ENCODE measurements at regions of chrX and their contacts with region 1.

Region 1: DNA sequence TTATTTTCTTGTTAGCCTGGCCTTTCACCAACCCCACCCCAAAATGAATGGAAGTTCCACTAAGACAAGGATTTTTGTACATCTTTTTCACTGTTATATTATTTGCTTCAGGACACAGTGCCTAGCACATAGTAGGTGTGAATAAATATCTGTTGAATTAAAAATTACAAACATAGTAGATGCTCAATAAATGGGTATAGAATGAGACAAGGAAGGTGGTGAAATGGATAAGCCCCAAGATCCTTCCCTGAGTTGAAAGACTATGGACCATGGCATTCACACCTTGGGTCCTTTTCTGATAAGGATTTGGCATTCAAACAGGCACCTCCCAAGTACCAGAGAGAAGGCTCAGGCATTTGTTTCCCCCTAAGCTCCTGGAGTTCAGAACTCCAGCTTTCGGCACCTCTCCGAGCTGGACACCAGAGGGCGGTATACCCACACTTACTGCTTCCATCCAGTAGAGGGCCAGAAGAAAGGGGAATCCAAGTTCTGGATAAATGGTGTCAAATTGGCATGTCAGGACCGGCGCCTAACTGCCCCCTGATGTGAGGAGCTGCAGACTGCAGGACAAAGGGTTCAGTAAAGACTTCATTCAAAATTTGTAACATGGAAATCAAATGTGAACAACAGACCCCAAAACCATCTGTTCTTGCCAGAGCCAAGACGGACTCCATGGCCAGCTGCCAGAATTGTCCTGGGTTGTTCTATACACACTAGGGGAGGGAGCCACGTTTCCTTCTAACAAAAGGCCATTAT is 193.0 kb downstream of the GPC3 start:
- DNase-seq: peak; percentile 23 to 76 (median 41)
- ATAC-seq: peak; percentile 68
- H3K4me3 ChIP-seq: no peak overlapping the region
- H3K4me3 Mint-ChIP-seq: no peak overlapping the region
- H3K27ac ChIP-seq: no peak overlapping the region
- H3K27ac Mint-ChIP-seq: no peak overlapping the region
- H3K4me1 ChIP-seq: no peaks in the 10 kb centered on the region
- H3K4me1 Mint-ChIP-seq: no peaks in the 10 kb centered on the region
- H3K27me3 ChIP-seq: no peaks in the 10 kb centered on the region
- H3K27me3 Mint-ChIP-seq: no peaks in the 10 kb centered on the region
- CTCF ChIP-seq: peak; percentile 91

Region 2: GRCh38 chrX:133415276-133416105 is 376.9 kb before region 1 on chrX and contains the start of gene GPC4:
- CTCF ChIA-PET with region 1: no interaction called
- POLR2A ChIA-PET with region 1: no interaction called
- intact Hi-C with region 1: no loop called
- DNase-seq: peak in 1 of 14 experiments; percentile 2
- ATAC-seq: no peak
- H3K4me3 ChIP-seq: no peak within 1 kb of the TSS
- H3K4me3 Mint-ChIP-seq: no peak within 1 kb of the TSS
- H3K27ac ChIP-seq: no peak within 1 kb of the TSS
- H3K27ac Mint-ChIP-seq: no peak within 1 kb of the TSS
- H3K4me1 ChIP-seq: no peaks in the 10 kb centered on the region
- H3K4me1 Mint-ChIP-seq: no peaks in the 10 kb centered on the region
- H3K27me3 ChIP-seq: peaks cover 0 to 60% of the 10 kb centered on the region in 2 experiments
- H3K27me3 Mint-ChIP-seq: peaks cover 54% of the 10 kb centered on the region
- CTCF ChIP-seq: no peak
- total RNA-seq, gene GPC4: not detected

Region 3: DNA sequence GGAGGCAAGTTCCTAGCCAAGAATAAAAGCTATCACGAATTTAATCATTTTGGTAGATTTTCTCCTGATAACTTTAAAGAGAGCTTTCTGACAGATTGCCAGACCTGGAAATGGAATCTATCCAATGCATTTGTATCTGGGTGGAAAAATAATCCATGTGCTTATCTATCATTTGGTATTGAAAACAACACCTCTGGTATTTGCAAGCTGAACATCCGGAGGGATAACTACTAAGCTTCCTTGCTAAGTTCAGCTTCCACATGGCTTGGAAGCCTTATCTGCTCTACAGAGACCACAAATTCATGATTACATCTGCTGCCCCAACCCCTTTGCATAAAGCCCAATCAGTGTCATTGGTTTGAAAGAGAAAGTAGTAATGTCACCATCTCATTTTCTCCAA is 37.7 kb before region 1 on chrX:
- CTCF ChIA-PET with region 1: no interaction called
- POLR2A ChIA-PET with region 1: no interaction called
- intact Hi-C with region 1: no loop called
- DNase-seq: no peak
- ATAC-seq: no peak
- H3K4me3 ChIP-seq: no peak overlapping the region
- H3K4me3 Mint-ChIP-seq: no peak overlapping the region
- H3K27ac ChIP-seq: no peak overlapping the region
- H3K27ac Mint-ChIP-seq: no peak overlapping the region
- H3K4me1 ChIP-seq: peaks cover 4% of the 10 kb centered on the region
- H3K4me1 Mint-ChIP-seq: peaks cover 13% of the 10 kb centered on the region
- H3K27me3 ChIP-seq: no peaks in the 10 kb centered on the region
- H3K27me3 Mint-ChIP-seq: no peaks in the 10 kb centered on the region
- CTCF ChIP-seq: no peak

Region 4: DNA sequence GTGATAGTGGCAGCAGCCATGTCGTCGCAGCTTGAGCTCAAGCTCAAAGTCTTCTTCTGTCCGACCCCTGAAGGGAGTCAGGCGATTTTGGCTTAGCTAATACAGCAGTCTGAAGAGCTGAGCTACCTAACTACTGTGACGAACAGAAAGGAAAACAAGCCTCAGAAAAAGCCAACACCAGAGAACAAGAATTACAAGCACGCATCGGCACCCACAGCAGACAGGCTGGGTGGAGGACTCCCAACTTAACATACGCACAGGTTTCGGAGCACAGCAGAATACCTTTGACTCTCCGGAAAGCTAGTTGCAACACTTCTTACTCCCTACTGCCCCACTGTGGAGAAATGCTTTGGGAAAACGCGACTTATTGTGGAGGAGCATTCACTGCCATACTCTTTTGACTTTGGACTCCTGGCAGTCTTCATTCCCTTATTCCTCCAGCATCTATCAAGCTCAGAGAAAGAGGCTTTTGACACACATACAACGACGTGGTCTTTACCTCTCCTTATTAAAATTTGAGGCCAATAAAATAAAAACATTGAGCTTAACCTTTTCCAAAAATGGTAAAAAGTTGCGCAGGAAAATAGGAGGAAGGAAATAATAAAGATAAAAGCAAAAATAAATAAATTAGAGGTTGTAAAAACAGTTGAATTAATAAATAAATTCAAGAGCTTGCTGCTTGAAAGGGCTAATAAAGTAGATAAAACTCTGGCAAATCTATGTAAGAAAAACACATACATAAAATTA is 234.4 kb after region 1 on chrX:
- CTCF ChIA-PET with region 1: interaction called, 3 read pairs
- POLR2A ChIA-PET with region 1: interaction called, 4 read pairs
- intact Hi-C with region 1: loop called (anchors 2 to 5 kb)
- DNase-seq: peak in 8 of 14 experiments; percentile 0 to 43 (median 18)
- ATAC-seq: peak; percentile 49
- H3K4me3 ChIP-seq: peak overlapping the region; percentile 3
- H3K4me3 Mint-ChIP-seq: peak overlapping the region; percentile 58
- H3K27ac ChIP-seq: no peak overlapping the region
- H3K27ac Mint-ChIP-seq: no peak overlapping the region
- H3K4me1 ChIP-seq: peaks cover 4% of the 10 kb centered on the region
- H3K4me1 Mint-ChIP-seq: peaks cover 9% of the 10 kb centered on the region
- H3K27me3 ChIP-seq: no peaks in the 10 kb centered on the region
- H3K27me3 Mint-ChIP-seq: no peaks in the 10 kb centered on the region
- CTCF ChIP-seq: peak; percentile 11

Region 5: DNA sequence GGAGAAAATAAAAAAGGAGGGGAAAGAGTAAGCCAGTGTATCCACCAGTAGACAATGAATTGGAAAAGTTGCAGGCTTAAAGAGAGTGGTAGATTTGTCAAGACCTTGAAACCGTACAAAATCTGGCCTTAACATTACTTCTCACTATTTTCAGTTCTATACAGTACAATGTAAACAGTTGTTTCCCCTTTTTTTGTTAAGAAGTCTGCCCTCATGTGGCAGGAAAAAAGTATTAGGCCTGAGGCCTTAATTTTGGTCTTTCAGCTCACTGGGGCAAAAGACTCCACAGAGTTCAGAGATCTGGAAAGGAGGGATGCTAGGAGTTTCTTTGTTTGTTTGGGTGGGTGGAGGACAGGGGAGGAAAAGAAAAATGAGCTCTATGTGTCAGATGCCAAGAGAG is 351.9 kb after region 1 on chrX:
- CTCF ChIA-PET with region 1: no interaction called
- POLR2A ChIA-PET with region 1: no interaction called
- intact Hi-C with region 1: loop called in 1 of 2 experiments (anchors 10 kb)
- DNase-seq: peak in 3 of 14 experiments; percentile 1 to 8 (median 4)
- ATAC-seq: no peak
- H3K4me3 ChIP-seq: no peak overlapping the region
- H3K4me3 Mint-ChIP-seq: no peak overlapping the region
- H3K27ac ChIP-seq: no peak overlapping the region
- H3K27ac Mint-ChIP-seq: no peak overlapping the region
- H3K4me1 ChIP-seq: no peaks in the 10 kb centered on the region
- H3K4me1 Mint-ChIP-seq: no peaks in the 10 kb centered on the region
- H3K27me3 ChIP-seq: no peaks in the 10 kb centered on the region
- H3K27me3 Mint-ChIP-seq: no peaks in the 10 kb centered on the region
- CTCF ChIP-seq: peak; percentile 26

Region 6: DNA sequence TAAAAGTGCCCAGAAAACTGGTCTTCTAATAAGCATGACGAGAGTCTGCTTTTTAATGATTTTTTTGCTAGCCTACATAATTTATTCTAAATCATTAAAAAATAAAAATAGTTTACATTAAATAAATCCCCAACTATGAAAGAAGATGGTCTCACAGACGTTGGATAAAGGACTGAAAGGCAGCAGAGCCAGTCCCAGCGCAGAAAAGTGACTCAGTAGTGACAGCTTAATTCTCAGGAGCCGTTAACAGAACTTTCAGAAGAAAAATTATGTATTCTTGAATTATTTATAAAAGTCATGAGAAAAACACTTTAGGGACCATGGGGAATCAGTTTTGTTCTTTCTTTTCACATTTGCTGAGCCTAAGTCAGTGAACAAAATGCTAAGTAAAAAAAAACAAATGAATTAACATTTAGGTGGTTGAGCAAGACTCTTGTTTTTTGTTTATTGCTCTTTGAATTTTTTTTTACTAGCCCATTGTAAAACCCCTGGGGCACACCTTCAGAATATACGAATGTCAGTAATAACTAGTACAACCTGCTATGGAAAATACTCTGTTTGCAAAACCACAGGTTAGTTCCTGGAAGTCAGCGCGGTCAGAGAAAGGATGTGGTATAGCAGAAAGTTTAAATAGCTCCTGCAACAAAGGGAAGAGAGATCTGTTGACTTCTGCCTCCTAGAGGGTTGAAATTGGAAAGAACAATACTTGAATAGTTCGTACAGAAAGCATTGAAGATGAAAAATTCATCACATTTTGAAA is 394.2 kb after region 1 on chrX:
- CTCF ChIA-PET with region 1: no interaction called
- POLR2A ChIA-PET with region 1: no interaction called
- intact Hi-C with region 1: loop called (anchors 2 to 5 kb)
- DNase-seq: peak in 12 of 14 experiments; percentile 8 to 86 (median 42)
- ATAC-seq: peak; percentile 92
- H3K4me3 ChIP-seq: no peak overlapping the region
- H3K4me3 Mint-ChIP-seq: peak overlapping the region; percentile 72
- H3K27ac ChIP-seq: no peak overlapping the region
- H3K27ac Mint-ChIP-seq: peak overlapping the region; percentile 22
- H3K4me1 ChIP-seq: peaks cover 19% of the 10 kb centered on the region
- H3K4me1 Mint-ChIP-seq: peaks cover 37% of the 10 kb centered on the region
- H3K27me3 ChIP-seq: no peaks in the 10 kb centered on the region
- H3K27me3 Mint-ChIP-seq: peaks cover 14% of the 10 kb centered on the region
- CTCF ChIP-seq: peak; percentile 25

Region 7: DNA sequence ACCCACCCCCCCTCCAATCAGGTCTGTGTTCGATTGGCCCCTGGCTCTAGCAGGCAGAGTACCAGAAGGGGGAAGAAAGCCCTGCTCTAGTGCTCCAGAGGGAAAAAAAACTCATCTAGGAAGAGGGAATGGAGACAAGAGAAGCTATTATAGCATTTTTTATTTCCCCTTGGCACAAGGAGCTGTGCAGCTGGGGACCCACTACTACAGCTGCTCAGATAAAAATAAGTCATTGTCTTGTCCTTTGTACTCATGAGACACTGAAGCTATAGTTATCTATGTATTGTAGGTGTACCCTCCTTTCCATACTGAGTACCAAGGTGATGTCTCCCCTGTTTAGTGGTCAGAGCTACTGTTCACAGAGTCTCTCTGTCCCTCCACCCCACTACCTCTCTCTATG is 458.9 kb after region 1 on chrX:
- CTCF ChIA-PET with region 1: interaction called, 5 read pairs
- POLR2A ChIA-PET with region 1: no interaction called
- intact Hi-C with region 1: loop called in 1 of 2 experiments (anchors 5 kb)
- DNase-seq: no peak
- ATAC-seq: no peak
- H3K4me3 ChIP-seq: no peak overlapping the region
- H3K4me3 Mint-ChIP-seq: no peak overlapping the region
- H3K27ac ChIP-seq: no peak overlapping the region
- H3K27ac Mint-ChIP-seq: no peak overlapping the region
- H3K4me1 ChIP-seq: no peaks in the 10 kb centered on the region
- H3K4me1 Mint-ChIP-seq: no peaks in the 10 kb centered on the region
- H3K27me3 ChIP-seq: peaks cover 0 to 7% of the 10 kb centered on the region in 2 experiments
- H3K27me3 Mint-ChIP-seq: no peaks in the 10 kb centered on the region
- CTCF ChIP-seq: no peak

Region 8: DNA sequence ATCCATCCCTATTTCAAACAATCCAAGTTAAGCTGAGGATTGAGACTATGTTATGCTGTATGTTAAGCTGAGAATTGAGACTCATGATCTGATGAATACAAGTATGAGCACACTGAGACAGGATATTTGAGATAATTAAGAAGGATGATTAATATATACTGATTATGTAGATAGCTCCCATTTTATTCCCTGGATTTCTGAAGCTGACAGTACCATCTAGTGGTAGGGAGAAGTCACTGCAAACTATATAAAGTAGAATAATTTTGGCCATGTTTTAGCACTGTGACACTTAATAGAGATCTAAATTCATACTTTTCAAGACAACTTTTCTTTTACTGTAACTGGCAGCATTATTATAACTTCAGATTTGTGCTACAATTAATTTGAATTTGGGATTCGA is 603.8 kb after region 1 on chrX:
- CTCF ChIA-PET with region 1: interaction called, 7 read pairs
- POLR2A ChIA-PET with region 1: interaction called, 4 read pairs
- intact Hi-C with region 1: loop called in 1 of 2 experiments (anchors 5 kb)
- DNase-seq: peak in 2 of 14 experiments; percentile 23 to 29
- ATAC-seq: no peak
- H3K4me3 ChIP-seq: no peak overlapping the region
- H3K4me3 Mint-ChIP-seq: no peak overlapping the region
- H3K27ac ChIP-seq: no peak overlapping the region
- H3K27ac Mint-ChIP-seq: no peak overlapping the region
- H3K4me1 ChIP-seq: no peaks in the 10 kb centered on the region
- H3K4me1 Mint-ChIP-seq: no peaks in the 10 kb centered on the region
- H3K27me3 ChIP-seq: no peaks in the 10 kb centered on the region
- H3K27me3 Mint-ChIP-seq: no peaks in the 10 kb centered on the region
- CTCF ChIP-seq: peak; percentile 64

Measured in CD4-positive, alpha-beta T cell (primary cell).